ENCODE measurements at regions of chr3 and their contacts with region 1.

Region 1: GRCh38 chr3:125428216-125428830 is 53.2 kb upstream of the ZNF148 start:
- DNase-seq: no peak
- H3K4me3 ChIP-seq: no peak overlapping the region
- CTCF ChIP-seq: no peak
- POLR2A ChIP-seq: no peak

Region 2: GRCh38 chr3:126119008-126119675 is 690.8 kb after region 1 on chr3:
- intact Hi-C with region 1: loop called (anchors 5 kb)
- DNase-seq: peak in 1 of 2 donors; percentile 72
- H3K4me3 ChIP-seq: no peak overlapping the region
- CTCF ChIP-seq: no peak
- POLR2A ChIP-seq: no peak

Measured in lower leg skin (tissue), 4 donors.